K562 (cell line): ENCODE measurements at regions of chr1 and their contacts with region 1.

Region 1: DNA sequence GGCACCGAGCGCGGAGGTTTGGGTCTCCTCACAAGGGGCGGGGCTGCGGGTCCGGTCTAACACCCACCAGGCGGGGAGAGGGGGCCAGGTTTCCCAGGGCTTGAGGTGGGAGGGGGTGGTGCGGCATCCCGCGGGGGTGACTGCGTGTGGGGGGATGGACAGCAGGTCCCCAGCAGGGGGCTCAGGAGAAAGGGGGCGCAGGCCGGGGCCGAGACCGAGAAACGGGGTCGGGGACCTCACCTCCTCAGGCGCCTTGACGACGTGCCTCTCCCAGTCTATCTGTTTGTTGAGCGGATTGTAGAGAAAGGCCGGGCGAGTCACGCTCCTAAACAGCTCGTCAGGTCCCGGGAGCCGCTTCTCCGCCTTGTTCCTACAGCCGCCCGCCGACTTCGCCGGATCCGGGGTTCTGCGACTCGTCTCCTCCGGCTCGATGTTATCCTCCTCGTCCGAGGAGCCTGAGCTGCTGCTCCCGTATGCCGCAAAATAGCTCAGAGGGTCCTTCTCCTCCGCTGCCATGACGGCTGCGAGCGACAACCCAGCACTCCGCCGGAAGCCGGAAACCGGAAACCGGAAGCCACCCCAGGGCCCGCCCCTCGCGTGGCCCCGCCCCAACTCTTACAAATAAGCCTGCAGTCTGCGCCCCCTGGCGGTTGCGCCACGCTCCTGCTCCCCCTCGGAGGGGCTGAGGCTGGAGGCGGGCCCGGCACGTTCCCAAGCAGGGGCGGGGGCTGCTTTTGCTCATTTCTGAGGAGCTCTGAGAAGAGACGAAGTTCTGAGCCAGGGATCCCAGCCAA is at the start of gene C1orf52:
- DNase-seq: peak; percentile 91 to 96 (median 92)
- ATAC-seq: peak; percentile 97
- H3K4me3 ChIP-seq: peak within 1 kb of the TSS; percentile 93
- H3K27ac ChIP-seq: peak within 1 kb of the TSS; percentile 86
- H3K4me1 ChIP-seq: peaks cover 3 to 10% of the 10 kb centered on the region in 2 experiments; a peak in 4 of 5 replicates
- H3K27me3 ChIP-seq: no peaks in the 10 kb centered on the region
- CTCF ChIP-seq: peak; percentile 88 to 94 (median 94)
- EP300 ChIP-seq: no peak
- POLR2A ChIP-seq: peak; percentile 95
- RAD21 ChIP-seq: peak; percentile 77 to 88
- polyA plus RNA-seq, gene C1orf52: 17.0 to 22.5 TPM

Region 2: GRCh38 chr1:84847253-84848250 is 411.8 kb before region 1 on chr1:
- CTCF ChIA-PET with region 1: no interaction called
- POLR2A ChIA-PET with region 1: no interaction called
- in situ Hi-C with region 1: no loop called
- intact Hi-C with region 1: no loop called
- DNase-seq: peak in 1 of 4 experiments; percentile 3
- ATAC-seq: no peak
- H3K4me3 ChIP-seq: no peak overlapping the region
- H3K27ac ChIP-seq: no peak overlapping the region
- H3K4me1 ChIP-seq: no peaks in the 10 kb centered on the region
- H3K27me3 ChIP-seq: peaks cover 0 to 15% of the 10 kb centered on the region in 2 experiments; a peak in 2 of 5 replicates
- CTCF ChIP-seq: no peak
- EP300 ChIP-seq: no peak
- POLR2A ChIP-seq: no peak
- RAD21 ChIP-seq: no peak

Region 3: DNA sequence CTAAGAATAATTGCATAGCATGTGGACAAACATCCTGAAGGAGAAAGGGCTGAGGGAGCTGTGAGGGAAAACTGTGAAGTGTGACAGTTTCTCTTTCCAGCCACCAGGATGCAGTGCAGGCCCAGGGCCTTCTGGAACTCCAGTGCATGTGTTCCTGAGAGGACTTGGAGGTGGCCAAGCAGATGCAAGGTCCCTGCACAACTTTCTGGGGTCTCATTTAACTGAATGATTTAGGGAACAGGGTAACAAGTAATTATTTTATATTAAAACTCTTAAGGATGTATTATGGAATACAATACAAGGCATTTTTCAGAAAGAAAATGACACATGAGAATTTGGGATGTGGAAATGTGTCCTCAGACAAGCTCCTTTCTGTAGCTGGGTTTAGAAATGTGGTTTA is 149.8 kb before region 1 on chr1:
- CTCF ChIA-PET with region 1: interaction called, 11 read pairs
- POLR2A ChIA-PET with region 1: interaction called, 7 read pairs
- in situ Hi-C with region 1: no loop called
- intact Hi-C with region 1: loop called (anchors 1 kb)
- DNase-seq: peak; percentile 23 to 76 (median 52)
- ATAC-seq: peak; percentile 100
- H3K4me3 ChIP-seq: no peak overlapping the region
- H3K27ac ChIP-seq: no peak overlapping the region
- H3K4me1 ChIP-seq: no peaks in the 10 kb centered on the region
- H3K27me3 ChIP-seq: peaks cover 0 to 6% of the 10 kb centered on the region in 2 experiments; a peak in 1 of 5 replicates
- CTCF ChIP-seq: peak; percentile 83 to 91 (median 90)
- EP300 ChIP-seq: no peak
- POLR2A ChIP-seq: no peak
- RAD21 ChIP-seq: peak; percentile 94 to 96

Region 4: GRCh38 chr1:85200870-85201339 is 58.4 kb before region 1 on chr1 and contains the start of gene SYDE2:
- CTCF ChIA-PET with region 1: no interaction called
- POLR2A ChIA-PET with region 1: no interaction called
- in situ Hi-C with region 1: no loop called
- intact Hi-C with region 1: loop called (anchors 5 kb)
- DNase-seq: peak; percentile 91 to 95 (median 92)
- ATAC-seq: peak; percentile 90
- H3K4me3 ChIP-seq: peak within 1 kb of the TSS; percentile 68
- H3K27ac ChIP-seq: peak within 1 kb of the TSS; percentile 90
- H3K4me1 ChIP-seq: peaks cover 3 to 17% of the 10 kb centered on the region in 2 experiments; a peak in 4 of 5 replicates
- H3K27me3 ChIP-seq: no peaks in the 10 kb centered on the region
- CTCF ChIP-seq: no peak
- EP300 ChIP-seq: no peak
- POLR2A ChIP-seq: peak; percentile 86
- RAD21 ChIP-seq: no peak
- polyA plus RNA-seq, gene SYDE2: 0.39 to 0.77 TPM